ENCODE measurements at regions of chr2 and their contacts with region 1.

Region 1: GRCh38 chr2:85707304-85707703 is 13.1 kb downstream of the GNLY start:
- DNase-seq: no peak
- ATAC-seq: peak; percentile 70
- H3K4me3 ChIP-seq: no peak overlapping the region
- H3K27ac ChIP-seq: no peak overlapping the region
- H3K4me1 ChIP-seq: no peaks in the 10 kb centered on the region
- H3K27me3 ChIP-seq: no peaks in the 10 kb centered on the region

Region 2: DNA sequence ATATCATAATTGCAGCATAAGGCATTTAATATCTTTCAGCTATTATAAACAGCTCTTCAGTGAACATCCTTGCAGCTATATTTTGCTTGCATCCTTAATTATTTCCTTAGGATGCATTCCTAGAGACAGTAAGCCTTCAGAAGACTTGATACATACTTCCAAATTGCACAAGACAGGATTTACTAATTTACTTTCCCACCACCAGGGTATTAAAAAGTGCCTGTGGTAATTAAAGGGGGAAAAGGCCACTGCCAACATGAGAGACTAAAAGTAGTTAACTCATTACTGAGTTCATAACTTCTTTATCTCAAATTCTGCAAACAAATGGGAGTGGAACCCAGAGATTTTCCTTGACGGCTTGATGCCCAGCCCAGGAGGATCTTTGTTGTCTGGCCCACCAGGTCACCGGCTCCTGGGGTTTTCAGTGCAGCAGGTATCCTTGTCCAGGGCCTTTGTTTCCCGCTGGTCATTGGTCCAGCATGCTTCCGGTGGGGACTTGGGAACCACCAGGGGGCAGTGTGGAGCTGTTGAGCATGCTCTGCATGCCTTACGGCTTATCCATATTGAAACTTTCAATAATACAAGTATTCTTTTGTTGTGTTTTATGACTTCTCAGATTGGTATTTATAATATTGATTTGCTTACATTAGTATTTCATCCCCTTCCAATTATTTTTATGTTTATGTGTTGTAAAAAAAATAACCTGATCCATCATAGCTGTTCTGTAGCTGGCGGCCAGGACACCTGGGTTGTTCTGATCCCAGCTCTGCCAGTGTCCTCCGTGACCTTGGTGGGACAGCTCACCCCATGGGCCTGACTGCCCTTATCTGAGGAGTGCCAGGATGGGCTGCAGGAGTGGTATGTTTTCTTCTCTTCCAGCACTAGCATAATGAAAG is 440.9 kb before region 1 on chr2:
- intact Hi-C with region 1: no loop called
- DNase-seq: peak; percentile 77 to 94
- ATAC-seq: peak; percentile 76
- H3K4me3 ChIP-seq: no peak overlapping the region
- H3K27ac ChIP-seq: peak overlapping the region in 1 of 2 donors; percentile 45
- H3K4me1 ChIP-seq: peaks cover 0 to 9% of the 10 kb centered on the region in 2 donors
- H3K27me3 ChIP-seq: no peaks in the 10 kb centered on the region

Region 3: GRCh38 chr2:85635636-85636035 is 71.7 kb before region 1 on chr2:
- intact Hi-C with region 1: loop called (anchors 1 to 5 kb)
- DNase-seq: no peak
- ATAC-seq: no peak
- H3K4me3 ChIP-seq: no peak overlapping the region
- H3K27ac ChIP-seq: no peak overlapping the region
- H3K4me1 ChIP-seq: no peaks in the 10 kb centered on the region
- H3K27me3 ChIP-seq: no peaks in the 10 kb centered on the region

Region 4: GRCh38 chr2:85642725-85643124 is 64.6 kb before region 1 on chr2:
- intact Hi-C with region 1: loop called (anchors 1 to 5 kb)
- DNase-seq: no peak
- ATAC-seq: no peak
- H3K4me3 ChIP-seq: no peak overlapping the region
- H3K27ac ChIP-seq: no peak overlapping the region
- H3K4me1 ChIP-seq: no peaks in the 10 kb centered on the region
- H3K27me3 ChIP-seq: no peaks in the 10 kb centered on the region